Natural killer cell (primary cell): ENCODE measurements at regions of chr10 and their contacts with region 1.

Region 1: DNA sequence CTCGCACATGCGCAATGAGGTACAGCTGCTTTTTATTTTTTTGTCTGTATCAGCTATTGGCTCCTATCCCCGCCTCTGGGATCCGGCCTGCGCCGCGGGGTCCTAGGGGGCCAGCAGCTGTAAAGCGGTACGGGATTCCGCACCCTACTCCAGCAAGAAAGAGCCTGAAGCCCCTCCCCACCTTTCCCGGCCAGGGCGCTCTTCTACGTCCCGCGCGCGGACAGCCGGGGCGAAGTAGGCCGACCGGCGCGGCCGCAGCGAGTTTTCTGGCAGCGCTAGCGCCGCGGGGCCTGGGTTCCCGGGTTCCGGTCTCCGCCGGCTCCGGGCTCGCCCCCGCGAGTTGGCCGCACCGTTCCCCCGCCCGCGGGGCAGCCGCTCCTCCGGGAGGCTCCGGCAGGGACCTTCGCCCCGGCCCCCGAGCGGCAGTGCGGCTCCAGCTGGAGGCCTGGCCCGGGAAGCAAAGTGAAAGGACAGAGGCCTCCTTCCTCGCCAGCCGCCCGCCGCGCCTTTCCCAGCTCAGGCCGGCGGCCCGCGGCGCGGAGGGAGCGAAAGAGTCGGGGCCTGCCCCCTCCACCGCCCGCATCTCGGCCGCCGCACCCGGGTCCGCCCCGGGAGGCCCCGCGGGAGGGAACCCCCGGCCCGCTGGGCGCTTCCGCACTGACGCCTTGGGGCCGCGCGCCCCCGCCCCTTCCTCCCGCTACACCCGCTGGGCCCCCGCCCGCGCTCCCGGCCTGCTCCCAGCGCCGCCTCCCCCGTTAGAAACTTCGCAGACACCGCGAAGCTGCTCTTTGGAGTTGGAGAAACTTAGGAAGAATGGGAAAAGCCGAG is 4.7 kb upstream of the SPAG6 start:
- DNase-seq: peak; percentile 63 to 74
- ATAC-seq: peak; percentile 56 to 73 (median 69)
- H3K4me3 ChIP-seq: peak overlapping the region; percentile 85
- H3K4me3 Mint-ChIP-seq: peak overlapping the region; percentile 89
- H3K27ac ChIP-seq: peak overlapping the region; percentile 83
- H3K27ac Mint-ChIP-seq: peak overlapping the region; percentile 86 to 91
- H3K4me1 ChIP-seq: peaks cover 38% of the 10 kb centered on the region
- H3K4me1 Mint-ChIP-seq: peaks cover 16 to 30% of the 10 kb centered on the region in 2 donors
- H3K27me3 ChIP-seq: peaks cover 90% of the 10 kb centered on the region
- H3K27me3 Mint-ChIP-seq: peaks cover 62 to 68% of the 10 kb centered on the region in 2 donors
- CTCF ChIP-seq: no peak

Region 2: GRCh38 chr10:22042557-22043326 is 297.8 kb before region 1 on chr10:
- intact Hi-C with region 1: no loop called
- DNase-seq: no peak
- ATAC-seq: no peak
- H3K4me3 ChIP-seq: no peak overlapping the region
- H3K4me3 Mint-ChIP-seq: no peak overlapping the region
- H3K27ac ChIP-seq: no peak overlapping the region
- H3K27ac Mint-ChIP-seq: no peak overlapping the region
- H3K4me1 ChIP-seq: no peaks in the 10 kb centered on the region
- H3K4me1 Mint-ChIP-seq: peaks cover 0 to 5% of the 10 kb centered on the region in 2 donors
- H3K27me3 ChIP-seq: peaks cover 2% of the 10 kb centered on the region
- H3K27me3 Mint-ChIP-seq: peaks cover 31 to 40% of the 10 kb centered on the region in 2 donors
- CTCF ChIP-seq: no peak

Region 3: GRCh38 chr10:22228943-22229801 is 111.4 kb before region 1 on chr10:
- intact Hi-C with region 1: loop called (anchors 2 kb)
- DNase-seq: peak; percentile 85 to 93
- ATAC-seq: peak; percentile 84 to 93 (median 85)
- H3K4me3 ChIP-seq: peak overlapping the region; percentile 69
- H3K4me3 Mint-ChIP-seq: peak overlapping the region; percentile 93
- H3K27ac ChIP-seq: peak overlapping the region; percentile 70
- H3K27ac Mint-ChIP-seq: peak overlapping the region; percentile 96 to 97
- H3K4me1 ChIP-seq: peaks cover 3% of the 10 kb centered on the region
- H3K4me1 Mint-ChIP-seq: peaks cover 15 to 21% of the 10 kb centered on the region in 2 donors
- H3K27me3 ChIP-seq: peaks cover 4% of the 10 kb centered on the region
- H3K27me3 Mint-ChIP-seq: peaks cover 14 to 16% of the 10 kb centered on the region in 2 donors
- CTCF ChIP-seq: no peak

Region 4: GRCh38 chr10:22301193-22301592 is 39.4 kb before region 1 on chr10:
- intact Hi-C with region 1: no loop called
- DNase-seq: no peak
- ATAC-seq: no peak
- H3K4me3 ChIP-seq: no peak overlapping the region
- H3K4me3 Mint-ChIP-seq: no peak overlapping the region
- H3K27ac ChIP-seq: no peak overlapping the region
- H3K27ac Mint-ChIP-seq: no peak overlapping the region
- H3K4me1 ChIP-seq: no peaks in the 10 kb centered on the region
- H3K4me1 Mint-ChIP-seq: no peaks in the 10 kb centered on the region
- H3K27me3 ChIP-seq: no peaks in the 10 kb centered on the region
- H3K27me3 Mint-ChIP-seq: peaks cover 18 to 34% of the 10 kb centered on the region in 2 donors
- CTCF ChIP-seq: no peak

Region 5: DNA sequence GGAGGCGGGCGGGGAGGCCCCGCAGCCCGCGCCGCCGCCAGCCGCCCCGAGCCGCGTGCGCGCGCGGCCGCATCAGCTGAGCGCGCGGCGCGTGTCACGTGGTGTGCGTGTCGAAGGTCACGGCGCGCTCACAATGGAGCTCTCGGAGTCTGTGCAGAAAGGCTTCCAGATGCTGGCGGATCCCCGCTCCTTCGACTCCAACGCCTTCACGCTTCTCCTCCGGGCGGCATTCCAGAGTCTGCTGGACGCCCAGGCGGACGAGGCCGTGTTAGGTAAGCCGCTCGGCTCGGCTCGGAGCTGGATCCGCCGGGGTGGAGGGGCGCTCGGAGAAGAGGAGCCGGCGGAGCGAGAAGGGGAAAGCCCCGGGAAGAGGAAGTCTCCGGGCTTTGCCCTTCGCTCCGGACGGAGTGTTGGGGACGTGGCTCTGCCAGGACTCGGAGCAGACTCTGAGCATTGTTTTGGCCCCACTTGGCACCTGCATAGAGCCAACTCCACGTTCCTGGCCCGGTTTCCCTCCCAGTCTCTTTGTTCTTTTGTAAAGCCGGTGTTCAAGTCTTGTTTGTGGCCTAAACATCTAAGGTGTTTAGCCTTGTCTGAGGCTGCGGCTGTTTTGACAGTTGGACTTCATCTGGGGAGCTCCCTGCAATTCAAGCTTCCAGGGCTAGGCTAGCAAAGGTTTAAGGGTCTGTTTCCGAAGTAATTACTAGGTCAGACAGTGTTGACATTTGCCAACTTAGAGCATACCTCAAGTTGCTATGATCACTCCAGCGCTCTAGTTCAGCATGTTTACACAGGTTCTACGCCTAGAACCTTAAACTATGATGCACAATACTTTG is 24.1 kb before region 1 on chr10 and contains the start of gene COMMD3:
- intact Hi-C with region 1: loop called (anchors 1 kb)
- DNase-seq: peak; percentile 83 to 94
- ATAC-seq: peak; percentile 65 to 92 (median 79)
- H3K4me3 ChIP-seq: peak within 1 kb of the TSS; percentile 96
- H3K4me3 Mint-ChIP-seq: peak within 1 kb of the TSS; percentile 100
- H3K27ac ChIP-seq: peak within 1 kb of the TSS; percentile 89
- H3K27ac Mint-ChIP-seq: peak within 1 kb of the TSS; percentile 92 to 93
- H3K4me1 ChIP-seq: peaks cover 11% of the 10 kb centered on the region
- H3K4me1 Mint-ChIP-seq: peaks cover 22 to 33% of the 10 kb centered on the region in 2 donors
- H3K27me3 ChIP-seq: peaks cover 2% of the 10 kb centered on the region
- H3K27me3 Mint-ChIP-seq: peaks cover 4 to 8% of the 10 kb centered on the region in 2 donors
- CTCF ChIP-seq: no peak
- total RNA-seq, gene COMMD3: 43.1 to 48.3 (median 44.2) TPM

Region 6: GRCh38 chr10:22752272-22752889 is 411.8 kb after region 1 on chr10:
- intact Hi-C with region 1: no loop called
- DNase-seq: no peak
- ATAC-seq: no peak
- H3K4me3 ChIP-seq: no peak overlapping the region
- H3K4me3 Mint-ChIP-seq: no peak overlapping the region
- H3K27ac ChIP-seq: no peak overlapping the region
- H3K27ac Mint-ChIP-seq: no peak overlapping the region
- H3K4me1 ChIP-seq: no peaks in the 10 kb centered on the region
- H3K4me1 Mint-ChIP-seq: peaks cover 12 to 17% of the 10 kb centered on the region in 2 donors
- H3K27me3 ChIP-seq: no peaks in the 10 kb centered on the region
- H3K27me3 Mint-ChIP-seq: no peaks in the 10 kb centered on the region
- CTCF ChIP-seq: no peak

Region 7: DNA sequence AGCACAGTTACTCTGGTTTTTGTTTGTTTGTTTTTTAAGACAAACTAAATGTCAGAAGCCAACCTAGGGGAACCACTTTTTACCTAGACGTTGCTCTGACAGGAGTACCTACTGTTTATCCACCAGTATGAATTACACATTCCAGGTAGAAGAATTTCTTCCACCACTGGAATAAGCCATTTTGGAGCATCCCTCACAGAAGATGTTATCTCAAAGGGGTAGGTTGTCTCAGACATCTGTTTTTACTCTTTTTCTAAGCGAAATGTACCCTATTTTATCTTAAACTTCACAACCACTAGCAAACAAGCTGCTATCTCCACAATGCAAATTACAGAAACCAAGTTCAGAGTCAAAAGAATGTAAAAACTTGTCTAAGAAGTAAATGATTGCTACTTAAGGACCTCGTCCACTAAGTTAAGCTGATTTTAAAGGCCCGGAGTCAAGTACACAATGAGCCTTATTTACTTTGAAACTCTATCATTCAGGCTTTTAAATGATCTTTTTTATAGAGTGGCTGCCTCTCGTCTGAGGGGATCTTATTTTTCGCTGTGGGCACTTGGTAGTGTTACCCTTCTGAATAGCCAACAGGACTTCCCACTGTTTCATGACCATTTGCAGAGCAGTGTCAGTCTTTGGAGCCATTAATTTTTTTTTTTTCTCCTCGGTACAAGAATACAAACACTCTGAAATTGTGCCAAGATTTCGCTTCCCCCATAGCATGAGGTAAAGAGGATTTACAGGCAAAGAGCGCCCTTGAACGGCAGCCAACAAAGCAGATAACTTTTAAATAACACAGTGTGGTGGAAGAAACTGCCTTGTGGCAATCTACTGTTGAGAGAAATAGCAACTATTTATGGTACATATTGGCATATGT is 571.5 kb after region 1 on chr10:
- intact Hi-C with region 1: loop called (anchors 10 kb)
- DNase-seq: no peak
- ATAC-seq: peak in 2 of 3 donors; percentile 9 to 27
- H3K4me3 ChIP-seq: no peak overlapping the region
- H3K4me3 Mint-ChIP-seq: peak overlapping the region; percentile 62
- H3K27ac ChIP-seq: peak overlapping the region; percentile 88
- H3K27ac Mint-ChIP-seq: peak overlapping the region; percentile 85 to 92
- H3K4me1 ChIP-seq: peaks cover 8% of the 10 kb centered on the region
- H3K4me1 Mint-ChIP-seq: peaks cover 26 to 34% of the 10 kb centered on the region in 2 donors
- H3K27me3 ChIP-seq: no peaks in the 10 kb centered on the region
- H3K27me3 Mint-ChIP-seq: no peaks in the 10 kb centered on the region
- CTCF ChIP-seq: no peak